Breast epithelium (tissue), 4 donors: ENCODE measurements at regions of chr21 and their contacts with region 1.

Region 1: DNA sequence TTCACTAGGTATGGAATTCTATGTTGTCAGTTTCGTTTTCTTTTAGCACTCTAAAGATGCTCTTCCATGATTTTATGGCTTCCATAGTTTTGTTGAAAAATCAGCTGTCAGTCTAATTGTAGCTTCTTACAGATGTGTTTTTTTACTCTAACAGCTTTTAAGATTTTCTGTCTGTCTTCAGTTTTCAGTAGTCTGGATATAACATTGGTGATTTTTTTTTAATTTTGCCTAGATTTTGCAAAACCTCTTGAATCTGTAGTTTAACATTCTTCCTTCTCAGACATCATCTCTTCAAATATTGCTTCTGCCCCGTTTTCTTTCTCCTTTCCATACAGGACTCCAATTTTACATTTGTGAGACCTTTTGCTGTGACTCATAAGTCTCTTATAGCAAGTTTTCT is 17.9 kb upstream of the DYRK1A start:
- DNase-seq: no peak
- H3K4me3 ChIP-seq: no peak overlapping the region
- H3K27ac ChIP-seq: no peak overlapping the region
- H3K4me1 ChIP-seq: no peaks in the 10 kb centered on the region
- H3K27me3 ChIP-seq: no peaks in the 10 kb centered on the region
- CTCF ChIP-seq: no peak
- POLR2A ChIP-seq: no peak

Region 2: GRCh38 chr21:38669176-38669575 is 1320.5 kb after region 1 on chr21:
- intact Hi-C with region 1: loop called (anchors 10 kb)
- DNase-seq: no peak
- H3K4me3 ChIP-seq: no peak overlapping the region
- H3K27ac ChIP-seq: no peak overlapping the region
- H3K4me1 ChIP-seq: no peaks in the 10 kb centered on the region
- H3K27me3 ChIP-seq: no peaks in the 10 kb centered on the region
- CTCF ChIP-seq: peak in 1 of 3 donors; percentile 24
- POLR2A ChIP-seq: no peak